Psoas muscle (tissue), 8 donors: ENCODE measurements at regions of chr15 and their contacts with region 1.

Region 1: GRCh38 chr15:27757050-27757449 is 342.1 kb downstream of the OCA2 start:
- DNase-seq: no peak
- ATAC-seq: no peak
- H3K4me3 ChIP-seq: no peak overlapping the region
- H3K27ac ChIP-seq: no peak overlapping the region
- H3K4me1 ChIP-seq: no peaks in the 10 kb centered on the region
- H3K27me3 ChIP-seq: no peaks in the 10 kb centered on the region
- CTCF ChIP-seq: no peak

Region 2: GRCh38 chr15:27694506-27695087 is 62.5 kb before region 1 on chr15:
- intact Hi-C with region 1: loop called in 1 of 2 experiments (anchors 10 kb)
- DNase-seq: no peak
- ATAC-seq: no peak
- H3K4me3 ChIP-seq: no peak overlapping the region
- H3K27ac ChIP-seq: no peak overlapping the region
- H3K4me1 ChIP-seq: no peaks in the 10 kb centered on the region
- H3K27me3 ChIP-seq: no peaks in the 10 kb centered on the region
- CTCF ChIP-seq: no peak

Region 3: DNA sequence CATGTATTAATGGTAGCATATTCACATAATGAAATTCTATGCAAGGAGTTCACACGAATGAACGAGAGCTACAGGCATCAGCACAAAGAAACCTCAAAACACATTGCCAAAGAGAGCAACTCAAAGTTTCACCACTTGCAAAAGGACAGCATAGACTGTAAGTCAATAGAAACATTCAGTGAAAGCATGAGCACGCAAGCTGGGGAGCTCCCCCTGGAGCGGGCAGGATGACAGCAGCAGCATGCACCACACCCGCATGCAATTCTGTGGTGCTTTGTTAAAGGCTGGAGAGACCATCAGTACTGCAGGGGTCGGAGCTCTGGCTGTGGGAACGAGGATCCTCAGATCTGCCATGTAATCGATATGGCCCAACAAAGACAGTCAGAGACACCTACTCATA is 323.3 kb after region 1 on chr15:
- intact Hi-C with region 1: no loop called
- DNase-seq: no peak
- ATAC-seq: no peak
- H3K4me3 ChIP-seq: no peak overlapping the region
- H3K27ac ChIP-seq: no peak overlapping the region
- H3K4me1 ChIP-seq: no peaks in the 10 kb centered on the region
- H3K27me3 ChIP-seq: no peaks in the 10 kb centered on the region
- CTCF ChIP-seq: no peak